Esophagus muscularis mucosa (tissue), 4 donors: ENCODE measurements at regions of chr1 and their contacts with region 1.

Region 1: DNA sequence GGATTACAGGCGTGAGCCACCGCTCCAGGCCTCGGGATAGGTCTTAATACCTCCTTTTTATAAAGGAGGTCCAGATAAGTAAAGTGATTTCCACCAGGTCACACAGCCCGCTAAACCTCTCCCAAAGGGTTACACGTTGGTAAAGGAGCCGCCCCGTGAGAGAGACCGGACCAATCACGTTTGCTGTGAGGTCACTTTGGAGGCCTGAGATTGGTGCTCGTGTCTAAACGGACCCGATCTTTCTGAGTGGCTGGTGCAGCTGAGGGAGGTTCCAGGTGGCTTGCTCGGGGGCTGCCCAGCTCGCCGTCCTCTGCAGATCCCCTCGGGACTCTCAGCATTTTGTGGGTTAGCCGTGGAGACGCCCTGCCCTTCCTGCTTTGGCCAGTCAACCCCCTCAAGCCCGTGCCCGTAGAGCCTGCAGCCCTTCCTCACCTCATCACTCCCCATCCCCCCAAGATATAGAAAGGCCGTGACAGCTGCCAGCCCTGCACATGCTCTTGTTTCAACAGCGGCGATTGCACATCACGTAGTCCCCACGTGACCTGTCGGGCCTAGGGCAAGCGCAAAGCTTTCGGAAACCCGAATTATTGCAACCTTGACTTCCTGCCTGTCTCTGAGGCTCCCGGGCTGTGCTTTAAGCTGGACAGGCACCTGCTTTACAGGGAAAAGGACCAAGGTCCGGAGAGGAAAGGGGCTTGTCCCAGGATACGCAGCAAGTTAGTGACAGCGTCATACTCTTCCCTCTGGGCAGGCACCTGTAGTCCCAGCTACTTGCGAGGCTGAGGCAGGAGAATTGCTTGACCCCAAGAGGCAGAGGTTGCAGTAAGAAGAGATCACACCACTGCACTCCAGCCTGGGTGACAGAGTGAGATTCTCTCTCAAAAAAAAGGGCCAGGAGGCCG is 5.0 kb upstream of the COA7 start:
- DNase-seq: peak; percentile 97
- H3K4me3 ChIP-seq: peak overlapping the region; percentile 53 to 72 (median 59)
- H3K27ac ChIP-seq: peak overlapping the region; percentile 78 to 85 (median 80)
- H3K4me1 ChIP-seq: peaks cover 16 to 29% (median 25%) of the 10 kb centered on the region in 4 donors
- H3K27me3 ChIP-seq: no peaks in the 10 kb centered on the region
- CTCF ChIP-seq: no peak
- EP300 ChIP-seq: no peak
- POLR2A ChIP-seq: no peak

Region 2: GRCh38 chr1:52574594-52574993 is 128.5 kb before region 1 on chr1:
- intact Hi-C with region 1: no loop called
- DNase-seq: no peak
- H3K4me3 ChIP-seq: no peak overlapping the region
- H3K27ac ChIP-seq: no peak overlapping the region
- H3K4me1 ChIP-seq: peaks cover 0 to 11% (median 9%) of the 10 kb centered on the region in 4 donors
- H3K27me3 ChIP-seq: no peaks in the 10 kb centered on the region
- CTCF ChIP-seq: no peak
- EP300 ChIP-seq: no peak
- POLR2A ChIP-seq: no peak

Region 3: DNA sequence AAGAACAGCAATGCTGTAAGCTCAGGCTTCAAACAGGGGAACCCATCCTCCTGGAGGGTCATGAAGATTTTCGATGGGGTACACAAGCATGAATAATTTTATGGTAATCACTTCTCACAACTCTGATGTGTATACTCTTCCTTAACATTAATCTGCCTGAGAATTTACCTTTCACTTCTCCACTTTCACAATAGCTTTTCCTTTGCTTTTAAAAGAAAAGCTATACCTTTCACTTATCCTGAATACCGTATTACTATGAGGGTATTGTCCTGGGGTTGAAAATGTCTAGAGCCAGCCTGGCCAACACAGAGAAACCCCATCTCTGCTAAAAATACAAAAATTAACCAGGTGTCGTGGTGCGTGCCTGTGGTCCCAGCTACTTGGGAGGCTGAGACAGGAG is 10.5 kb after region 1 on chr1:
- intact Hi-C with region 1: no loop called
- DNase-seq: no peak
- H3K4me3 ChIP-seq: no peak overlapping the region
- H3K27ac ChIP-seq: no peak overlapping the region
- H3K4me1 ChIP-seq: peaks cover 4 to 11% (median 8%) of the 10 kb centered on the region in 4 donors
- H3K27me3 ChIP-seq: no peaks in the 10 kb centered on the region
- CTCF ChIP-seq: no peak
- EP300 ChIP-seq: no peak
- POLR2A ChIP-seq: no peak

Region 4: GRCh38 chr1:52748119-52748518 is 45.0 kb after region 1 on chr1:
- intact Hi-C with region 1: loop called (anchors 5 kb)
- DNase-seq: no peak
- H3K4me3 ChIP-seq: no peak overlapping the region
- H3K27ac ChIP-seq: no peak overlapping the region
- H3K4me1 ChIP-seq: peaks cover 33 to 59% (median 49%) of the 10 kb centered on the region in 4 donors
- H3K27me3 ChIP-seq: no peaks in the 10 kb centered on the region
- CTCF ChIP-seq: peak; percentile 19 to 34 (median 23)
- EP300 ChIP-seq: no peak
- POLR2A ChIP-seq: no peak

Region 5: GRCh38 chr1:52970149-52970548 is 267.0 kb after region 1 on chr1:
- intact Hi-C with region 1: no loop called
- DNase-seq: no peak
- H3K4me3 ChIP-seq: no peak overlapping the region
- H3K27ac ChIP-seq: no peak overlapping the region
- H3K4me1 ChIP-seq: no peaks in the 10 kb centered on the region
- H3K27me3 ChIP-seq: no peaks in the 10 kb centered on the region
- CTCF ChIP-seq: no peak
- EP300 ChIP-seq: no peak
- POLR2A ChIP-seq: no peak